Activated CD8-positive, alpha-beta T cell treated with anti-CD3 and anti-CD28 coated beads, Interleukin-2, amount 10 ng/mL, durations not matched to agents 7 days and 5 days (primary cell): ENCODE measurements at regions of chr1 and their contacts with region 1.

Region 1: DNA sequence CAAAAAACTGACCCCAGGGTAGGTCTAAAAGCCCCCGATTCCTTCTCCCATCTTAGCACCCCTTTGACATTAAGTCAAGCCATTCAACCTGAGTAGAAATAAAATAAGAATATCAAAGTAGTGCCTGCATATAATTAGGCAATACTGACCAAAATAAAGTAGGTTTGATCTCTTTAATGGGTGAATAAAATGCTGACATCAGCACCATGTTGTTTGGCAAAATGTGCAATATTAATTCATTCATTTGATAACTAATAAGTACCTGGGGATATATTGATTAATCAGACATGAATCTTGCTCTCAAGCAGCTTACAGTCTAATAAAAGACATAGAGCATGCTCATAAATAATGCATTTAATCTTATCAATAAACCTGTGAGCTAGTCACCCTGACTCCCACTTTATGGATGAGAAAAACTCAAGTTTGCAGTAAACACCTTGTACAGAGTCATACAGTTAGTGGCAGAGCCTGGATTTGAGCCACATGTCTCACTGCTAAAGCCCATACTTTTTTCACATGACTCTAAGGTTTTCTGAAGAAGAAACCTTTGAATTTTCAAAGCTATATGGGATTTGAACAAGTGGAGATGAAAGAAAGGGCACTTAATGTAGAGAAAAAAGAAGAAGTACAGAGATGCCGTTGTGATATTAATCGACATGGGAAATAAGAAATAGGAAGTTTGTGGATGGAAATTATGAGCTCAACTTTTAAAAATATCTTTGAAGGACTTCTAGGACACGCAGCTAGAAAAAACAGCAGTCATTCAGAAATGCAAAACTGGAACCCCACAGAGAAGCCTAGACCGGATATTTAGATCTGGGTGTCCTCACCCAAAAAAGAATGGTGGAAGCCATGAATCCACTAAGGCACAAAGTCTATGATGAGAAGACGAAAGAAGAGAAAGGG is 183.9 kb downstream of the TOMM20 start:
- DNase-seq: no peak
- ATAC-seq: no peak
- H3K4me3 Mint-ChIP-seq: no peak overlapping the region
- H3K27ac Mint-ChIP-seq: no peak overlapping the region
- H3K4me1 Mint-ChIP-seq: peaks cover 6% of the 10 kb centered on the region
- H3K27me3 Mint-ChIP-seq: no peaks in the 10 kb centered on the region

Region 2: GRCh38 chr1:234955107-234955731 is 10.5 kb after region 1 on chr1:
- CTCF ChIA-PET with region 1: interaction called, 12 read pairs
- POLR2A ChIA-PET with region 1: interaction called, 4 read pairs
- DNase-seq: no peak
- ATAC-seq: peak; percentile 71
- H3K4me3 Mint-ChIP-seq: no peak overlapping the region
- H3K27ac Mint-ChIP-seq: peak overlapping the region; percentile 83
- H3K4me1 Mint-ChIP-seq: peaks cover 55% of the 10 kb centered on the region
- H3K27me3 Mint-ChIP-seq: no peaks in the 10 kb centered on the region

Region 3: GRCh38 chr1:235011599-235012435 is 67.1 kb after region 1 on chr1:
- CTCF ChIA-PET with region 1: no interaction called
- POLR2A ChIA-PET with region 1: no interaction called
- DNase-seq: peak; percentile 98
- ATAC-seq: peak; percentile 97
- H3K4me3 Mint-ChIP-seq: peak overlapping the region; percentile 74
- H3K27ac Mint-ChIP-seq: peak overlapping the region; percentile 99
- H3K4me1 Mint-ChIP-seq: peaks cover 86% of the 10 kb centered on the region
- H3K27me3 Mint-ChIP-seq: no peaks in the 10 kb centered on the region